Heart left ventricle (tissue), 16 donors: ENCODE measurements at regions of chr7 and their contacts with region 1.

Region 1: DNA sequence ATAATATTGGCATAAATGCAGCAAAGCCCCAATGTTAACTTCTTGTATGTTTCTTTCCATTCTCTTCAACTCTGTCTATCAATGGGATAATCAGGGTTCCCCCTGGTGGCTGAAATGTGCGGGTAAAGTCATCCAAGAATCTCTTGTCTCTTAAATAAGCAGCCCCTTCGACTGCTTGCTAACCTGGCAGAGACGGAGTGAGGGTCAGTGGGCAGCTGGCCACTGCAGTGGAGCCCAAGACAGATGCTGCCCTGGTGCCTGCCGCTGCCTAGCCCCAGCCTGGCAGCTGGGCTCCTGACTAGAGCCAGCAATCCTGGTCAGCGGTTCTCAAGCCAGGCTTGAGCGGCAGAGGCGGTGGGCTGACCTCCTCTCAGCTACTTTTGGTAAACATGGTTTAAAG is 248.9 kb downstream of the COBL start:
- DNase-seq: peak; percentile 43 to 66 (median 56)
- ATAC-seq: peak in 1 of 4 donors; percentile 59
- H3K4me3 ChIP-seq: no peak overlapping the region
- H3K27ac ChIP-seq: no peak overlapping the region
- H3K4me1 ChIP-seq: peaks cover 8 to 40% (median 20%) of the 10 kb centered on the region in 12 donors
- H3K27me3 ChIP-seq: no peaks in the 10 kb centered on the region
- CTCF ChIP-seq: peak; percentile 59 to 84 (median 74)
- POLR2A ChIP-seq: no peak

Region 2: DNA sequence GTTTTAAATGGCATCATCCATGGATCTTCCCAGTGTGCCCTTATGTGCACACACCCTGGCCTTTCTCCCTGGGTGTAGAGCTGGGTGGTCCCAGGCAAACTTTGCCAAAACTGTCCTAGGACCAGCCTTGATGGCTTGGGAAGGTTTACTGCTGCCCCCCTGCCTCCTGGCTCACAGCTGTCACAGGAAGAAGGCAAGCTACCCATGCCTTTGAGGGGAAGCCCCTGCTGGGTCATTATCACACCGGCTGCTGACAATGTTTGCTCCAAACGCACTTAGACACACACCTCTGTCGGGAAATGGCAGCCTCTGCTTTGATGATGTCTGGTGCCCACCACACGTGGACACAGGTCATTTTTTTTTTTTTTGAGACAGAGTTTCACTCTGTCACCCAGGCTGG is 592.4 kb before region 1 on chr7:
- intact Hi-C with region 1: loop called in 1 of 10 experiments (anchors 5 kb)
- DNase-seq: no peak
- ATAC-seq: no peak
- H3K4me3 ChIP-seq: no peak overlapping the region
- H3K27ac ChIP-seq: no peak overlapping the region
- H3K4me1 ChIP-seq: no peaks in the 10 kb centered on the region
- H3K27me3 ChIP-seq: no peaks in the 10 kb centered on the region
- CTCF ChIP-seq: no peak
- POLR2A ChIP-seq: no peak

Region 3: GRCh38 chr7:50696810-50697582 is 370.8 kb before region 1 on chr7:
- intact Hi-C with region 1: loop called in 1 of 10 experiments (anchors 10 kb)
- DNase-seq: no peak
- ATAC-seq: no peak
- H3K4me3 ChIP-seq: no peak overlapping the region
- H3K27ac ChIP-seq: peak overlapping the region in 1 of 12 donors; percentile 43
- H3K4me1 ChIP-seq: peaks cover 0 to 45% (median 15%) of the 10 kb centered on the region in 12 donors
- H3K27me3 ChIP-seq: no peaks in the 10 kb centered on the region
- CTCF ChIP-seq: peak in 10 of 12 donors; percentile 17 to 53 (median 40)
- POLR2A ChIP-seq: no peak

Region 4: GRCh38 chr7:50838675-50839377 is 228.9 kb before region 1 on chr7:
- intact Hi-C with region 1: loop called in 1 of 10 experiments (anchors 5 kb)
- DNase-seq: peak in 4 of 5 donors; percentile 54 to 80 (median 61)
- ATAC-seq: peak; percentile 78 to 97 (median 93)
- H3K4me3 ChIP-seq: no peak overlapping the region
- H3K27ac ChIP-seq: peak overlapping the region in 8 of 12 donors; percentile 8 to 75 (median 47)
- H3K4me1 ChIP-seq: peaks cover 0 to 12% (median 2%) of the 10 kb centered on the region in 12 donors
- H3K27me3 ChIP-seq: no peaks in the 10 kb centered on the region
- CTCF ChIP-seq: peak in 1 of 12 donors; percentile 15
- POLR2A ChIP-seq: no peak

Region 5: DNA sequence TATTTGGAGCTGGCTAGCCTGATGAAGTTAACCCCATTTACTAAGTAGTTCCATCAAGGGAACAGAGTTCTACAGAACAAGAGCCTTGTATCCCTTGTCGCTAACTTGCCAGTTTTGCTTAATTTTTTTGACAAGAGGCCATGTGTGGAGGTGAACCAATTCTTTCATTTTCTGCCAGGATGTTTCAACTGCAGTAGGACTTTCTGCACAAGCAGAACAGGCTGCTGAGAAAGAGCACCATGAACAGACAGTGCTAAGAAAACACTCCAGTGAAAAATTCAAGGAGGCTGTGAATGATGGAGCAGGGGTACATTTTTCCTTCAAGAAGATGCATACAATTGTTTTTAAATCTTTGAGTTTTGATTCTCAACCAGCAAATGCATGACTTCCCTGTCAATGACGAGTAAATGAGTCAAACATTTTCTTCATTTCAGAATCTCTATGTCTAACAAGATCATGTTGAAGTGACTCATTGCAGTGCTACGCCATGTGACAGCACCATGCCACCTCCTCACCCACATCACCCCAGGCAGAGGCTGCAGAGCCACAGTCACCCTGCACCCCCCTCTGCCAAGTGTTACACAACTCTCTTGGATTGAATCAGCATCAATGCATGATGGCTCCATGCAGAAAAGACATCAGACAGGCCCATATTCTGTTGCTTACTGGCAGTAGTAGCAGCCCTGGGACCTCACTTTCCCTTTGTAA is 55.7 kb after region 1 on chr7:
- intact Hi-C with region 1: loop called in 2 of 10 experiments (anchors 2 to 5 kb)
- DNase-seq: peak in 3 of 5 donors; percentile 36 to 56 (median 40)
- ATAC-seq: peak; percentile 40 to 88 (median 64)
- H3K4me3 ChIP-seq: no peak overlapping the region
- H3K27ac ChIP-seq: peak overlapping the region in 8 of 12 donors; percentile 21 to 88 (median 74)
- H3K4me1 ChIP-seq: peaks cover 0 to 37% (median 26%) of the 10 kb centered on the region in 12 donors
- H3K27me3 ChIP-seq: no peaks in the 10 kb centered on the region
- CTCF ChIP-seq: no peak
- POLR2A ChIP-seq: no peak